Activated B cell treated with CpG ODN at 0.5 μM for 24 hours (primary cell): ENCODE measurements at regions of chr19 and their contacts with region 1.

Region 1: DNA sequence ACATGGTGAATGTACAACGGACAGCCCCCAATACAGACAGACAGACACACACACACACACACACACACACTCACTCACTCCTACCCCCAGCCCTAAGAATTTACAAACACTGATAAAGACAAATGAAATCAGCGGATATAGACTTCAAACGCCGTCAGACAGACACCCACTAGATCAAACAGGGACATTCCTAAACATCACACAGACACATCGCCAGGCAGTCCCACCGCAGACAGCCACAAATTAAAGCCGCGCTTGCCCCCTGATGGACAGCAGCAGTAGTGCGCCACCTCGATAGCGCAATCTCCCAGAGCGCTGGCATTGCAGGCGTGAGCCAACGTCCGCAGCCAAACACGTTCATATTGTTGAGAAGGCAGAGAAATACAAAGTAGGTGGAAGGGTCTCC is 24.7 kb upstream of the ADGRE1 start:
- DNase-seq: peak; percentile 77
- ATAC-seq: peak; percentile 89
- H3K4me3 Mint-ChIP-seq: peak overlapping the region; percentile 85
- H3K27ac Mint-ChIP-seq: peak overlapping the region; percentile 76
- H3K4me1 Mint-ChIP-seq: peaks cover 15% of the 10 kb centered on the region
- H3K27me3 Mint-ChIP-seq: peaks cover 2% of the 10 kb centered on the region
- CTCF ChIP-seq: no peak

Region 2: GRCh38 chr19:6161271-6161850 is 701.3 kb before region 1 on chr19:
- CTCF ChIA-PET with region 1: interaction called, 5 read pairs
- POLR2A ChIA-PET with region 1: no interaction called
- intact Hi-C with region 1: loop called (anchors 1 kb)
- DNase-seq: no peak
- ATAC-seq: peak; percentile 72
- H3K4me3 Mint-ChIP-seq: no peak overlapping the region
- H3K27ac Mint-ChIP-seq: peak overlapping the region; percentile 46
- H3K4me1 Mint-ChIP-seq: peaks cover 7% of the 10 kb centered on the region
- H3K27me3 Mint-ChIP-seq: no peaks in the 10 kb centered on the region
- CTCF ChIP-seq: no peak

Region 3: GRCh38 chr19:6424939-6425731 is 437.5 kb before region 1 on chr19:
- CTCF ChIA-PET with region 1: interaction called, 3 read pairs
- POLR2A ChIA-PET with region 1: interaction called, 4 read pairs
- intact Hi-C with region 1: loop called (anchors 1 kb)
- DNase-seq: peak; percentile 92
- ATAC-seq: peak; percentile 83
- H3K4me3 Mint-ChIP-seq: peak overlapping the region; percentile 78
- H3K27ac Mint-ChIP-seq: peak overlapping the region; percentile 85
- H3K4me1 Mint-ChIP-seq: peaks cover 30% of the 10 kb centered on the region
- H3K27me3 Mint-ChIP-seq: no peaks in the 10 kb centered on the region
- CTCF ChIP-seq: no peak

Region 4: GRCh38 chr19:6521718-6522646 is 340.7 kb before region 1 on chr19:
- CTCF ChIA-PET with region 1: interaction called, 52 read pairs
- POLR2A ChIA-PET with region 1: interaction called, 14 read pairs
- intact Hi-C with region 1: loop called (anchors 1 kb)
- DNase-seq: peak; percentile 70
- ATAC-seq: peak; percentile 73
- H3K4me3 Mint-ChIP-seq: peak overlapping the region; percentile 75
- H3K27ac Mint-ChIP-seq: peak overlapping the region; percentile 99
- H3K4me1 Mint-ChIP-seq: peaks cover 55% of the 10 kb centered on the region
- H3K27me3 Mint-ChIP-seq: no peaks in the 10 kb centered on the region
- CTCF ChIP-seq: no peak

Region 5: DNA sequence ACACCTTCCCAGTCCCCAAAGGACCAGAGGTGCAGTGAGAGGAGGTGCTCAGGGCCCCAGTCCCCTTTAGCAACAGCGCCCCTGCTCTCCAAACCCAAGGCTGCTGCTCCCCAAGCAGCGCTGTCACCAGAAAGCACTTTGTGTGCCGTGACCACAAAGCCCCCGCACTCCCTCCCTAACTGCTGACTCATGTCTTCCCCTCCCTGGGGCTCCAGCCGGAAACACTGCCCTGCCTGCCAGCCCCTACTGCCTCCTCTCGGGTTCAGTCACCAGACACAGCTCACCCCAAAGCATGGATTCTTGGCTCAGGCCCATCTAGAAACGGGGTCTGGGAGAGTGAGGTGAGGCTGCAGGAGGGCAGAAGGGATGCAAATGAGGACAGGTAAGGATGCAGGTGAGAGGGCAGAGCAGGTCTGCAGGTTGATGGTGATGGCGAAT is 187.8 kb before region 1 on chr19:
- CTCF ChIA-PET with region 1: no interaction called
- POLR2A ChIA-PET with region 1: no interaction called
- intact Hi-C with region 1: loop called (anchors 1 kb)
- DNase-seq: peak; percentile 50
- ATAC-seq: peak; percentile 69
- H3K4me3 Mint-ChIP-seq: no peak overlapping the region
- H3K27ac Mint-ChIP-seq: peak overlapping the region; percentile 7
- H3K4me1 Mint-ChIP-seq: peaks cover 30% of the 10 kb centered on the region
- H3K27me3 Mint-ChIP-seq: peaks cover 20% of the 10 kb centered on the region
- CTCF ChIP-seq: no peak

Region 6: GRCh38 chr19:6801485-6802086 is 61.1 kb before region 1 on chr19:
- CTCF ChIA-PET with region 1: interaction called, 9 read pairs
- POLR2A ChIA-PET with region 1: interaction called, 17 read pairs
- intact Hi-C with region 1: loop called (anchors 1 kb)
- DNase-seq: peak; percentile 89
- ATAC-seq: peak; percentile 71
- H3K4me3 Mint-ChIP-seq: peak overlapping the region; percentile 83
- H3K27ac Mint-ChIP-seq: peak overlapping the region; percentile 94
- H3K4me1 Mint-ChIP-seq: peaks cover 83% of the 10 kb centered on the region
- H3K27me3 Mint-ChIP-seq: no peaks in the 10 kb centered on the region
- CTCF ChIP-seq: no peak